ENCODE measurements at regions of chr3 and their contacts with region 1.

Region 1: GRCh38 chr3:56801662-56802377 is at the start of gene ARHGEF3:
- DNase-seq: peak; percentile 86 to 90 (median 86)
- H3K4me3 ChIP-seq: peak within 1 kb of the TSS; percentile 86 to 87
- H3K4me3 Mint-ChIP-seq: peak within 1 kb of the TSS; percentile 92 to 99 (median 96)
- H3K27ac ChIP-seq: peak within 1 kb of the TSS; percentile 79
- H3K27ac Mint-ChIP-seq: peak within 1 kb of the TSS; percentile 85 to 98 (median 92)
- H3K4me1 ChIP-seq: peaks cover 38% of the 10 kb centered on the region
- H3K4me1 Mint-ChIP-seq: peaks cover 33 to 64% (median 43%) of the 10 kb centered on the region in 4 donors
- H3K27me3 ChIP-seq: no peaks in the 10 kb centered on the region
- H3K27me3 Mint-ChIP-seq: no peaks in the 10 kb centered on the region
- total RNA-seq, gene ARHGEF3: 120 TPM

Region 2: DNA sequence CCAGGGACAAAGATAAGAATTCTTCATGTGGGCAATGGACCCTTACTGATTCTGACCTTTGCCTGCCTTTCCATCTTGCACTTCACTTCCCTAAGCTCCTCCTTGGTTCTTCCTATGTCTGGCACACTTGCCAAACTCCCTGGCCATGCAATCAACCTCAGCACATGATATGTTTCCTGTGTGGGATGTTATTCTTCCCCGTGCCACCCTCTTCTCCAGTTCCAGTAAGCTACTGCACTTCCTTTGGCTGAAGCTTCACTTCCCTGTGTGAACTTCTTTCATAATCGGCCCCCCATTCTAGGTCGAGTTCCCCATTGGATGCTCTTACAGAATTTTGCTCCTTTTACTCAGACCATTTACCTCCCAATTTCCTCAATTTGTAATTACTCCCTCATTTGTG is 108.1 kb before region 1 on chr3:
- CTCF ChIA-PET with region 1: interaction called, 35 read pairs
- POLR2A ChIA-PET with region 1: interaction called, 30 read pairs
- intact Hi-C with region 1: no loop called
- DNase-seq: no peak
- H3K4me3 ChIP-seq: no peak overlapping the region
- H3K4me3 Mint-ChIP-seq: peak overlapping the region in 7 of 8 donors; percentile 37 to 86 (median 80)
- H3K27ac ChIP-seq: no peak overlapping the region
- H3K27ac Mint-ChIP-seq: peak overlapping the region in 6 of 7 donors; percentile 3 to 86 (median 70)
- H3K4me1 ChIP-seq: peaks cover 38% of the 10 kb centered on the region
- H3K4me1 Mint-ChIP-seq: peaks cover 36 to 46% (median 41%) of the 10 kb centered on the region in 4 donors
- H3K27me3 ChIP-seq: no peaks in the 10 kb centered on the region
- H3K27me3 Mint-ChIP-seq: no peaks in the 10 kb centered on the region

Region 3: DNA sequence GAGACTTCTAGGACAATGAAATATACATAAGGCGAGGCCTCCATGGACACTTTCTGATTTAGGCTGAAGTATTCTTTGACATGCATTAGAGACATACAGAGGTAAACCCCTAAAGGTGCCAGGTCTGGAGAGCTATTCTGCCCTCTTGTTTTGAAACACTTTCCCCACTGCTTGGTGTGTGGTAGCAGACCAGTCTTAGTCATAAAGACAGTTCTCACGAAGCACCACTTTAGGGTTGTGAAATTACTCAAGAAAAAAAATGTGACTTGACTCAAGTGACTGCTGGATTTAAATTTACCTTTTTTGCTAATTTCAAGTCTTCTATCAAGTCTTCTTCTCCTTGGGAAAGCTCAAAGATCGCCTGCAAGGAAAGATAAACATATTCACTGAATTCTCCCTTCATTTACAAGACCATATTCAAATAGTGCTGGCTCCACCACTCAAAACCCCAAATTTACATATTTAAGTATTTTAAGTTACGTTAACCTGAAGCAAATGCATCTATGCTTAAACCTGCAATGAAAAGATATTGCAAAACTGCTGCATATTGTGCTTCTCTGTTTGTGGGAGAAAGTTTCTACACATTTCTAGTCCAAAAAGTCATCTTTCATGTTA is 48.5 kb before region 1 on chr3:
- CTCF ChIA-PET with region 1: interaction called, 267 read pairs
- POLR2A ChIA-PET with region 1: interaction called, 172 read pairs
- intact Hi-C with region 1: loop called (anchors 1 kb)
- DNase-seq: peak in 1 of 5 donors; percentile 33
- H3K4me3 ChIP-seq: no peak overlapping the region
- H3K4me3 Mint-ChIP-seq: peak overlapping the region in 6 of 8 donors; percentile 1 to 96 (median 76)
- H3K27ac ChIP-seq: peak overlapping the region; percentile 22
- H3K27ac Mint-ChIP-seq: peak overlapping the region; percentile 42 to 97 (median 76)
- H3K4me1 ChIP-seq: peaks cover 62% of the 10 kb centered on the region
- H3K4me1 Mint-ChIP-seq: peaks cover 43 to 68% (median 54%) of the 10 kb centered on the region in 4 donors
- H3K27me3 ChIP-seq: no peaks in the 10 kb centered on the region
- H3K27me3 Mint-ChIP-seq: no peaks in the 10 kb centered on the region

Region 4: DNA sequence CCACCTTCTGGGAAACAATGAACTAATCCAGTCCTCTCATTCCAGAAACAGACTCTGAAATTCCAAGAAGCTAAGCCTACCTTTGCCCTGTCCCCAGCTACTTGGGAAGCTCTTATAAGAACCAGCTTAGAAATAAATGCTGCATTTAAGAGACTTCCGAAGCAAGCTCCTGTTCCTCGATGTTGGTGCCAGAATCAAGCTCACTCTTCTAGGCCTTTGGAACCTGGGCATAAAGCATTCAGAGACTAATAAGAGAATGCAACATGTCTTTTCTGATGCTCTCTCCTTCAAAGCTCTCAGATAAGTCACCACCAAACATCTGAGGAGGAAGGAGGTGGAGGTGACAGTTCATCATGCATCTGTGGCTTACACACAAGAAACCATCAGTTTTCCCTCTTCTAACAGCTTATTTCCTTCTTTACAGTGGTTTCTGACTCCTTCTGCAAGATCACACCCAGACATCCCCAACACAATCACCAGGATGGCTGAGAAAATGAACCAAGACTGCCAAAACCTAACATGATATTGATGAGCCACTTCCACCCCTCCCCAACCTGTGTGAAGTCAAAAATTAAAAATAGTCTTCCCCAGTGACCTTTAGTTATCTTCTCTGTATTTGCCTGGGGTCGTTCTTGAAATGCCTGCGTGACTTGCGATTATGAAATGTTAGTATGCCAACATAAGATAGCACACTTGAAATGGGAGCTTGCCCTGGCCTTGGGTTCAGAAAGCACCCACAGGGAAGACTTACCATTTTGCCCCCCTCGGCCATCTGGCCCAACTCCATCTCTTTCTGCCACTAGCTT is 11.6 kb before region 1 on chr3:
- CTCF ChIA-PET with region 1: interaction called, 127 read pairs
- POLR2A ChIA-PET with region 1: interaction called, 218 read pairs
- intact Hi-C with region 1: loop called (anchors 1 kb)
- DNase-seq: peak; percentile 39 to 63 (median 42)
- H3K4me3 ChIP-seq: peak overlapping the region in 1 of 2 donors; percentile 22
- H3K4me3 Mint-ChIP-seq: peak overlapping the region; percentile 5 to 80 (median 70)
- H3K27ac ChIP-seq: peak overlapping the region; percentile 69
- H3K27ac Mint-ChIP-seq: peak overlapping the region; percentile 82 to 97 (median 86)
- H3K4me1 ChIP-seq: peaks cover 91% of the 10 kb centered on the region
- H3K4me1 Mint-ChIP-seq: peaks cover 72 to 94% (median 79%) of the 10 kb centered on the region in 4 donors
- H3K27me3 ChIP-seq: no peaks in the 10 kb centered on the region
- H3K27me3 Mint-ChIP-seq: no peaks in the 10 kb centered on the region

Region 5: DNA sequence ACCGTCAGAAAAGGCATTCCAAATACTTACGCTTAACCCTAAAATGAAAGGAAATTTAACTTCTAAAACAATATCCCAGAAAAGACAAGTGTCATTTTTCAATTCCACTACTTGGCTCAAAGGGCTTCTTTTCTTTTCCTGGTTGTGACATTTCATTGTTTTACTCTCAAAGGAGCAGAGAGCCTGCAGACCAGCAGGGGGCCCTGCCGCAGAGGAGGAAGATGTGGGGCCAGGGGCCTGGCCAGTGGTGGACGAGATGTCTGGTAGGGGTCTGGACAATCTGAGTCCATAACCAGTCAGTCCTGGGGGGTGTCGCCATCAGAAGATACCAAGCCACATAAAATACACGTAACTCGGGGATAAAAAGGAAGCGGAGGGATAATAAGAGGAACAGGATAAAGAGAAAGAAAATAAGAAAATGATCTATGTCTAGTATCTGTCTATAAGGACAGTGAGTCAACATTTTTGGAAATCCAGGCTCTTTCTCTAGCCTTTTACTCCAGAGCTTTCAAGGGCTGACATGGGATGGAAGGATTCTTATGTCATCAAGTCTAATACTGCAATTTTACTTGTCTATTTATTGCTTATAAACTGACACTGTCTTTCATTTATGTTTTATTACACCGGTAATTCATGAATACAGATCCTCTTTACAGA is 54.2 kb after region 1 on chr3:
- CTCF ChIA-PET with region 1: interaction called, 8 read pairs
- POLR2A ChIA-PET with region 1: interaction called, 20 read pairs
- intact Hi-C with region 1: loop called (anchors 5 kb)
- DNase-seq: peak in 1 of 5 donors; percentile 17
- H3K4me3 ChIP-seq: no peak overlapping the region
- H3K4me3 Mint-ChIP-seq: peak overlapping the region in 2 of 8 donors; percentile 11 to 58
- H3K27ac ChIP-seq: no peak overlapping the region
- H3K27ac Mint-ChIP-seq: peak overlapping the region in 6 of 7 donors; percentile 10 to 79 (median 56)
- H3K4me1 ChIP-seq: peaks cover 39% of the 10 kb centered on the region
- H3K4me1 Mint-ChIP-seq: peaks cover 48 to 80% (median 61%) of the 10 kb centered on the region in 4 donors
- H3K27me3 ChIP-seq: no peaks in the 10 kb centered on the region
- H3K27me3 Mint-ChIP-seq: no peaks in the 10 kb centered on the region

Region 6: GRCh38 chr3:56923521-56924224 is 121.9 kb after region 1 on chr3:
- CTCF ChIA-PET with region 1: interaction called, 95 read pairs
- POLR2A ChIA-PET with region 1: interaction called, 193 read pairs
- intact Hi-C with region 1: no loop called
- DNase-seq: peak; percentile 79 to 86 (median 81)
- H3K4me3 ChIP-seq: peak overlapping the region in 1 of 2 donors; percentile 19
- H3K4me3 Mint-ChIP-seq: peak overlapping the region; percentile 45 to 81 (median 76)
- H3K27ac ChIP-seq: peak overlapping the region; percentile 79
- H3K27ac Mint-ChIP-seq: peak overlapping the region; percentile 97 to 100 (median 100)
- H3K4me1 ChIP-seq: peaks cover 96% of the 10 kb centered on the region
- H3K4me1 Mint-ChIP-seq: peaks cover 66 to 87% (median 80%) of the 10 kb centered on the region in 4 donors
- H3K27me3 ChIP-seq: no peaks in the 10 kb centered on the region
- H3K27me3 Mint-ChIP-seq: no peaks in the 10 kb centered on the region

Region 7: GRCh38 chr3:57692259-57693147 is 890.7 kb after region 1 on chr3 and contains the start of gene DENND6A:
- CTCF ChIA-PET with region 1: no interaction called
- POLR2A ChIA-PET with region 1: no interaction called
- intact Hi-C with region 1: loop called (anchors 10 kb)
- DNase-seq: peak; percentile 87 to 96 (median 95)
- H3K4me3 ChIP-seq: peak within 1 kb of the TSS; percentile 15 to 95
- H3K4me3 Mint-ChIP-seq: peak within 1 kb of the TSS; percentile 82 to 97 (median 92)
- H3K27ac ChIP-seq: peak within 1 kb of the TSS; percentile 84
- H3K27ac Mint-ChIP-seq: peak within 1 kb of the TSS; percentile 79 to 97 (median 94)
- H3K4me1 ChIP-seq: peaks cover 49% of the 10 kb centered on the region
- H3K4me1 Mint-ChIP-seq: peaks cover 16 to 45% (median 32%) of the 10 kb centered on the region in 4 donors
- H3K27me3 ChIP-seq: no peaks in the 10 kb centered on the region
- H3K27me3 Mint-ChIP-seq: no peaks in the 10 kb centered on the region
- total RNA-seq, gene DENND6A: 40.1 to 43.7 TPM